Right ventricle myocardium inferior (tissue), 1 donor: ENCODE measurements at regions of chr11 and their contacts with region 1.

Region 1: GRCh38 chr11:11543656-11544055 is 78.1 kb downstream of the GALNT18 start:
- DNase-seq: no peak
- ATAC-seq: peak; percentile 23

Region 2: DNA sequence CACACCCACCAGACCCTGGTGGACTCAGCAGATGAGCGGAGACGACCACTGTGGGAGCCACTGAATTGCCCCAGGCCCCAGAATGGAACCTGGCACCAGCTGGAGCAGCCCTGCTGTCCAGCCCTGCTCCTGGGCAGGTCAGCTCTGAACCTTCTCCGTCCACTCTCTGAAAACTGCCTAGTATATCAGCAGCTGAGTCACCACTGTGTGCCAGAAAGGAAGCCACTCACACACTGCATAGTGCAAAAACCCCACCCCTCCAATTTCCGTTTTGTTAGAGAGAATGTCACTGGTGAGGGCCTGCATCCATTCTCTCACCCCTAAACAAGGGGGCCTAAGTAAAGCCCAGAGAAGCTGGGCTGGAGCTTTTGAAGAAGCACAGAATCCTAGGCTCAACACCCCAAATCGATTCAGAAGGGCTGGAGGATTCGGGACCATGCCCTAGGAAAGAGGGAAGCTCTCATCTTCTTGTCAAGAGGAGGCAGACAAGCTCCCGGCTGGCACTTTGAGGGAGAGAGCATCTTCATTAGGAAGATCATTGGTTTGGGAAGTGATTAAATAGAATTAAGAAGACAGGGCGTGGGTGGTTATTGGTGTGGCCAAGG is 33.7 kb after region 1 on chr11:
- intact Hi-C with region 1: loop called (anchors 2 kb)
- DNase-seq: no peak
- ATAC-seq: no peak